ENCODE measurements at regions of chr16 and their contacts with region 1.

Region 1: GRCh38 chr16:46908540-46909372 is 24.6 kb downstream of the GPT2 start:
- DNase-seq: peak; percentile 20
- H3K4me3 Mint-ChIP-seq: no peak overlapping the region
- H3K27ac Mint-ChIP-seq: no peak overlapping the region
- H3K4me1 Mint-ChIP-seq: peaks cover 12% of the 10 kb centered on the region
- H3K27me3 Mint-ChIP-seq: no peaks in the 10 kb centered on the region

Region 2: GRCh38 chr16:46673320-46674013 is 235.3 kb before region 1 on chr16:
- intact Hi-C with region 1: loop called (anchors 2 kb)
- DNase-seq: peak; percentile 25
- H3K4me3 Mint-ChIP-seq: no peak overlapping the region
- H3K27ac Mint-ChIP-seq: no peak overlapping the region
- H3K4me1 Mint-ChIP-seq: no peaks in the 10 kb centered on the region
- H3K27me3 Mint-ChIP-seq: no peaks in the 10 kb centered on the region

Region 3: DNA sequence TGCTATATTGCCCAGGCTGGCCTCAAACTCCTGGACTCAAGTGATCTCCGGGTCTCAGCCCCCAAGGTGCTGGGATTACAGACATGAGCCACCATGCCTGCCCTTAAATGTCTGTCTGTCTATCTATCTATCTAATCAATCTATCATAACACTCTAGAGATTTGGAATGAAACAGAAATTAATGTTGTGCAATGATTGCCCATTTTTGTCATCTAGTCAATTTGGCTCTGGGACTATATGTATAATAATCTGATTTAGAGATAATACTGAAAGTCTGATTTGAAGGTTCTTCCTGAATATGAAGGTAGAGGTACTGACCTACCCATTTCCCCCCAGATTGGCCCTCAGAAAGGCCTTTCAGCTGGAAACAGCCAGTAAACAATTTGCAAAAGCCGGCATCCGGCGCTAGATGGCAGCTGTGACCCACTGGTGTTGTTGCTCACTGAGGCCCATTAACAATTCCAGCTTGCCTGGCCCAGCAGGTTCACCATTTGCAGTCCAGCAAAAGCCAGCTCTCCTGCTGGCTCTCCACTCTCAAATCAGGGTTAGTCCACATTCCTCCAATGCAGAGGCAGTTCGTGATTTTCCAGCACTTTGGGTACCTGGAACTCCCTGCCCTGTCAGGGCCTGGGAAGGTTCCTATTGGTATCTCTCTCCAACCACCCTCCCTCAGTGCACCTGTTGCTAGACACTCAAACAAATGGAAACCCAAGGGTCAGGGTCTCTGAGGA is 54.9 kb before region 1 on chr16:
- intact Hi-C with region 1: loop called (anchors 1 kb)
- DNase-seq: peak; percentile 46
- H3K4me3 Mint-ChIP-seq: no peak overlapping the region
- H3K27ac Mint-ChIP-seq: no peak overlapping the region
- H3K4me1 Mint-ChIP-seq: peaks cover 2% of the 10 kb centered on the region
- H3K27me3 Mint-ChIP-seq: peaks cover 2% of the 10 kb centered on the region

Region 4: GRCh38 chr16:46896314-46896968 is 12.3 kb before region 1 on chr16:
- intact Hi-C with region 1: no loop called
- DNase-seq: no peak
- H3K4me3 Mint-ChIP-seq: no peak overlapping the region
- H3K27ac Mint-ChIP-seq: no peak overlapping the region
- H3K4me1 Mint-ChIP-seq: peaks cover 6% of the 10 kb centered on the region
- H3K27me3 Mint-ChIP-seq: no peaks in the 10 kb centered on the region

Region 5: GRCh38 chr16:46937536-46937935 is 28.8 kb after region 1 on chr16:
- intact Hi-C with region 1: no loop called
- DNase-seq: no peak
- H3K4me3 Mint-ChIP-seq: no peak overlapping the region
- H3K27ac Mint-ChIP-seq: no peak overlapping the region
- H3K4me1 Mint-ChIP-seq: peaks cover 2% of the 10 kb centered on the region
- H3K27me3 Mint-ChIP-seq: no peaks in the 10 kb centered on the region